ENCODE measurements at regions of chr1 and their contacts with region 1.

Region 1: GRCh38 chr1:1748686-1749321 is 24.6 kb upstream of the CDK11A start:
- DNase-seq: peak; percentile 59
- H3K4me3 ChIP-seq: no peak overlapping the region
- H3K27ac ChIP-seq: no peak overlapping the region
- H3K4me1 ChIP-seq: peaks cover 5% of the 10 kb centered on the region
- H3K27me3 ChIP-seq: no peaks in the 10 kb centered on the region
- CTCF ChIP-seq: no peak

Region 2: DNA sequence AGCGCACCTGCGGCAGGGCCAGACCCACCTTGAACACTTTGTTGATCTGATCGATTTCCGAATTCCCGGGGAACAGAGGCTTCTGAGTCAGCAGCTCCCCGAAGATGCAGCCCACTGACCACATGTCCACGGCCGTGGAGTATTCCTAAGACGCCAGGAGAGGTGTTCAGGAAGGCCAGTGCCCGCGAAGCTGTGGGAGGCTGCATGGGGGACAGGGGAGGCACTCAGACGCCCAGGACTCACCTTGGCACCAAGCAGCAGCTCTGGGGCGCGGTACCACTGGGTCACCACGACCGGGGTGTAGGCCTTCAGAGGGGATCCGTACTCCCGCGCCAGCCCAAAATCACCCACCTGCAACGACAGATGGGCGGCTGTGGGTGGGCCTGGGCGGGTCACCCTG is 45.0 kb before region 1 on chr1:
- CTCF ChIA-PET with region 1: no interaction called
- POLR2A ChIA-PET with region 1: no interaction called
- intact Hi-C with region 1: loop called (anchors 10 kb)
- DNase-seq: no peak
- H3K4me3 ChIP-seq: no peak overlapping the region
- H3K27ac ChIP-seq: no peak overlapping the region
- H3K4me1 ChIP-seq: no peaks in the 10 kb centered on the region
- H3K27me3 ChIP-seq: no peaks in the 10 kb centered on the region
- CTCF ChIP-seq: no peak